Activated B cell treated with CpG ODN at 0.5 μM for 24 hours (primary cell): ENCODE measurements at regions of chr11 and their contacts with region 1.

Region 1: DNA sequence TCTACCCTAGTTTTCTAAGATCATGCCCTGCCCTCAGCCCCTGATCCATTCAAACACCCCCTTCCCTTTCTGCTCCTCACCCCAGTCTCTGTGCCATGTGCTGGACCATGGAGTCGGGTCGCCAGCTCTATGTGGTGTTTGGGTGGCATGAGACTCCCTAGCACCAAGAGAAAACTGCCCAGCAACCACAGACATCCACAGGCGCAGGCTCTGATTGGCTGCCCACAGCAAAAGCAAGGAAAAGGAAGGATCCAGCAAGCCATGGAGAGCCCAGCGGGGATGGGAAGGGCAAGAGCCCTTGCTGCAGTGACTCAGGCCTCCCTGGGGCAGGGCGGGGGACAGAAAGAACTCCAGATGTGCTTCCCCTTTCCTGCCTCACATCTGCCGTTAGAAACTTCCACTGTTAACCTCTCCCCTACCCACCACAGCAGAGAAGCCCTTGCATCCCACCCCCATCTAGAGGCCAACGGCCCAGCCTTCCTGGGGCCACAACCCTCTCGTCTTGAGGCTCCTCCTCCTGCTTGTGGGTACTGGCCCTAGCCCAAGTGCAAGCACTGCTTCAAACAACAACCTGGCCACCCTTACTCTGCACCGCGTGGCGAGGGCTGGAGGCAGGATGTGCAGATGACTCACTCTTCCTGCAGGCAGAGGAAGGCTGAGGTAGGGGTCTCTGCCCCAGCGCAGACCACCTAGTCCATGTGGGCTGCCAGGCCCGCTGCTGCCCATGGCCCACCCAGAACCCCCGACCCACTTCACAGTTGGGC is 9.7 kb upstream of the AHNAK start:
- DNase-seq: peak; percentile 64
- ATAC-seq: peak; percentile 35
- H3K4me3 Mint-ChIP-seq: peak overlapping the region; percentile 81
- H3K27ac Mint-ChIP-seq: peak overlapping the region; percentile 99
- H3K4me1 Mint-ChIP-seq: peaks cover 87% of the 10 kb centered on the region
- H3K27me3 Mint-ChIP-seq: no peaks in the 10 kb centered on the region
- CTCF ChIP-seq: no peak

Region 2: GRCh38 chr11:62394825-62395538 is 161.3 kb before region 1 on chr11:
- CTCF ChIA-PET with region 1: interaction called, 16 read pairs
- POLR2A ChIA-PET with region 1: interaction called, 5 read pairs
- intact Hi-C with region 1: loop called (anchors 1 kb)
- DNase-seq: no peak
- ATAC-seq: peak; percentile 79
- H3K4me3 Mint-ChIP-seq: no peak overlapping the region
- H3K27ac Mint-ChIP-seq: no peak overlapping the region
- H3K4me1 Mint-ChIP-seq: no peaks in the 10 kb centered on the region
- H3K27me3 Mint-ChIP-seq: peaks cover 6% of the 10 kb centered on the region
- CTCF ChIP-seq: no peak

Region 3: DNA sequence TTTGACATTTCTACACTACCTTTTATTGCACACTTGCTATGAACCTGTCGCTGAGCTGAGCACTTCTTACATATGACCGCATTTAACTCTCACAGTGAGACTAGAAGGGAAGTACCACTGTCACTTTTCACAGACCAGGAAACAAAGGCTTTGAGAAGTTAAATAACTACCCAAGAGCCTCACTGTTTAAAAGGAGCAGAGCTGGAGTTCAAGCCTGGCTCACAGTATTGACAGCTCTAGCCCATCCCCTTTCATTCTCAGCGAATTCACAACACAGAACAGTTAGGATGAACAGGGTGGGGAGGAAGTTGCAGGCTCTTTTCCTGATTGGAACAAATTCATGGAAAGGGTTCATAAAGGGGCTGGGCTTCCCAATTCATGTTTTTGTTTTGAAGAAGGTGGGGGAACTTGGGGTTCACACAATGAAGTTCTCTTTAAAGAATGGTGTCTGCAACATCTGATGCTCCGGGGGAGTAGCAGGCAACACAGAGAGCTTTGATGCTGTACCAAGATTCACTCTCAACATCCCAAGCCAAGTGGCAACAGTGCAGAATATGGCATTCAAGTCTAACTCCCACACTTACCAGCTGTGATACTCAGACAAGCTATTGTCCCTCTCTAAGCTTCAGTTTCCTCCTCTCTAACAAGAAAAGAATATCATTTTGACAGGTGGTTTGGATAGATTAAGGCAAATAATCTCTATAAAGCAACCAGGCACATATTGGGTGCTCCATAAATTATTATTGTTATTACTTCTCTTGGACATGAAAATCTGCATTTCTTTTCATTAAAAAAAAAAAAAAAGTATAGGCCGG is 120.2 kb before region 1 on chr11:
- CTCF ChIA-PET with region 1: no interaction called
- POLR2A ChIA-PET with region 1: interaction called, 12 read pairs
- intact Hi-C with region 1: no loop called
- DNase-seq: no peak
- ATAC-seq: peak; percentile 66
- H3K4me3 Mint-ChIP-seq: no peak overlapping the region
- H3K27ac Mint-ChIP-seq: peak overlapping the region; percentile 5
- H3K4me1 Mint-ChIP-seq: peaks cover 36% of the 10 kb centered on the region
- H3K27me3 Mint-ChIP-seq: no peaks in the 10 kb centered on the region
- CTCF ChIP-seq: no peak

Region 4: GRCh38 chr11:62497132-62497915 is 59.0 kb before region 1 on chr11:
- CTCF ChIA-PET with region 1: interaction called, 13 read pairs
- POLR2A ChIA-PET with region 1: interaction called, 3 read pairs
- intact Hi-C with region 1: loop called (anchors 1 kb)
- DNase-seq: no peak
- ATAC-seq: peak; percentile 66
- H3K4me3 Mint-ChIP-seq: no peak overlapping the region
- H3K27ac Mint-ChIP-seq: no peak overlapping the region
- H3K4me1 Mint-ChIP-seq: no peaks in the 10 kb centered on the region
- H3K27me3 Mint-ChIP-seq: peaks cover 7% of the 10 kb centered on the region
- CTCF ChIP-seq: no peak

Region 5: DNA sequence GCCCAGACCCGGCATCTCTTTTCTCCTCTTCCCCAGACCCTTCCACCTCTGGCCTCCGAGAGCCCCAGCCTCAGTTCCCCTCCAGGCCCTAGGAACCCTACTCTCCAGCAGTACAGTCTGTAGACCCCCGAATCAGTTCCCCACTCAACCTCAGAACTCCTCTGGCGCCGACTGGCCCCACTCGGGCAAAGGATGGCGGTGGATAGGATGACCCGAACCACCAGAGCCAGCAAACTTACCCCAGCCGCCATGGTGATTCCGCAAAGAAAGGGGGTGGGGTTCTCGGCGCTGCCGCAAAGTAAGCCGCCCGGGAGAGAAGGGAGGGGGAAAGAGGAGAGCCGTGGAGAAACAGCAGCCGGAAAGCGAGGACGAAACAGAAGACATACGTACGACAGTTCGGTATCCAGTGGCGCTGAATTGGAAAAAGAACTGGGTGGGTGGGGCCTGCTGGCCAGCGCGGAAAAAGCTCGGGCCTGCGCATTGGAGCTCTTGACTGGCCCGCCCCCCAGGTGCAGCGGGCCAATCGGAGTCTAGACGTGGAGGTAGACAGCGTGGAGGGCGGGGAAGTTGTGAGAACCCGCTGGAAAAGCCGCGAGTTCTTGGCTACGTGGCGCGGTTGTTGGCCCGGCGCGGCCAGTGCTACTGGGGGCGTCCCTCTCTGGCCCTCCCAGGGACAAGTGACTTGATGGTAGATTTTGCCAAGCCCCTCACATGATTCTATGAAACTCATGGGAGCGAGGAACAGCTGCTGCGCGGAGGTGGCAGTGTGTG is 17.5 kb after region 1 on chr11 and contains the start of gene EEF1G:
- CTCF ChIA-PET with region 1: interaction called, 3 read pairs
- POLR2A ChIA-PET with region 1: interaction called, 40 read pairs
- intact Hi-C with region 1: loop called (anchors 1 kb)
- DNase-seq: peak; percentile 92
- ATAC-seq: peak; percentile 94
- H3K4me3 Mint-ChIP-seq: peak within 1 kb of the TSS; percentile 97
- H3K27ac Mint-ChIP-seq: peak within 1 kb of the TSS; percentile 94
- H3K4me1 Mint-ChIP-seq: peaks cover 51% of the 10 kb centered on the region
- H3K27me3 Mint-ChIP-seq: no peaks in the 10 kb centered on the region
- CTCF ChIP-seq: no peak
- total RNA-seq, gene EEF1G: 2,373 and 2,524 TPM in 2 replicates

Region 6: DNA sequence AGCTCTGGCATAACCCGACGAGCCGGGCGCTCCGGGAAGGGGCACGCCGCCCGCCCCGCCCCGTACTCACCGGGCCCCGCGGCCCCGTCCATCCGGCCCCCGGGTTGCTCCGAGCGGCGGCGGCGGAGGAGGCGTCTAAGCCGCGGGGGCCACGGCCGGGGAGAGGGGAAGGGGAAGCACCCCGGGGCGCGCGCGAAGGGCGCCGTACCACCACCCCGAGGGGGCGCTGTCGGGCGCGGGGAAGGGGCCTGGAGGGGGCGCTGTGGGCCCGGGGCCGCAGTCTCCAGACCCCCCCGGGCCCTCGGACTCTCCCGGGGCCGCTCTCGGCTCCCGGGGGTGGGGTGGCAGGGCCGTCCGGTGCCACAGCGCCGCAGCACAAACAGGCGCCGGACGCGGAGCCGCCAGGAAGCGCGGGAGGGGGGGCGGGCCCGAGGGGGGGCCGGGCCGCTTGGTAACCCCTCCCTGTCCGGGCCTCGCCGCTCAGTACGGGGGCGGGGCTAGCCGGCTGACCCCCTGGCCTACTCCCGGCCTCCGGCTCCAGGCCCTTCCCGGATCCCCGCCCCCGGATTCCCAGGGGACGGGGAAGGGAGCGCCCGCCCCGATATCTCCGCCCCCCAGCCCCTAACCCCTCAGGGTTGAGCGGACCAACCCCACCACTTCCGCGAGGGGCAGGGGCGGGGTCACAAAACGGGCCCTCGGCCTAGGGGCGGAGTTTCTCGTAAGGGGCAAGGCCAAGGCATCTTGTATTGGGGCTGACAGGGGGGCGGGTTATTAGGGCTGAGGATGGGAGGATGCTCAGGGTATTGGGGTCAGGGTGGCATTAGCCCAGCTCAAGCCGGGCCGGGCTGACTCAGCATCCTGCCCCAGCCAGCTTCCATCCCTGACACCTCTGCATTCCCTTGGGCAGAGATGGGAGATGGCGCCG is 56.3 kb after region 1 on chr11 and contains the starts of genes EML3 and ROM1:
- CTCF ChIA-PET with region 1: no interaction called
- POLR2A ChIA-PET with region 1: no interaction called
- intact Hi-C with region 1: no loop called
- DNase-seq: peak; percentile 95
- ATAC-seq: peak; percentile 82
- H3K4me3 Mint-ChIP-seq: peak within 1 kb of the TSS; percentile 93
- H3K27ac Mint-ChIP-seq: peak within 1 kb of the TSS; percentile 95
- H3K4me1 Mint-ChIP-seq: peaks cover 27% of the 10 kb centered on the region
- H3K27me3 Mint-ChIP-seq: no peaks in the 10 kb centered on the region
- CTCF ChIP-seq: peak; percentile 59
- total RNA-seq, gene EML3: 115 and 128 TPM in 2 replicates
- total RNA-seq, gene ROM1: 0.89 and 2.6 TPM in 2 replicates

Region 7: GRCh38 chr11:62652161-62653006 is 96.1 kb after region 1 on chr11:
- CTCF ChIA-PET with region 1: no interaction called
- POLR2A ChIA-PET with region 1: interaction called, 10 read pairs
- intact Hi-C with region 1: no loop called
- DNase-seq: no peak
- ATAC-seq: no peak
- H3K4me3 Mint-ChIP-seq: peak overlapping the region; percentile 90
- H3K27ac Mint-ChIP-seq: peak overlapping the region; percentile 90
- H3K4me1 Mint-ChIP-seq: peaks cover 28% of the 10 kb centered on the region
- H3K27me3 Mint-ChIP-seq: no peaks in the 10 kb centered on the region
- CTCF ChIP-seq: no peak

Region 8: DNA sequence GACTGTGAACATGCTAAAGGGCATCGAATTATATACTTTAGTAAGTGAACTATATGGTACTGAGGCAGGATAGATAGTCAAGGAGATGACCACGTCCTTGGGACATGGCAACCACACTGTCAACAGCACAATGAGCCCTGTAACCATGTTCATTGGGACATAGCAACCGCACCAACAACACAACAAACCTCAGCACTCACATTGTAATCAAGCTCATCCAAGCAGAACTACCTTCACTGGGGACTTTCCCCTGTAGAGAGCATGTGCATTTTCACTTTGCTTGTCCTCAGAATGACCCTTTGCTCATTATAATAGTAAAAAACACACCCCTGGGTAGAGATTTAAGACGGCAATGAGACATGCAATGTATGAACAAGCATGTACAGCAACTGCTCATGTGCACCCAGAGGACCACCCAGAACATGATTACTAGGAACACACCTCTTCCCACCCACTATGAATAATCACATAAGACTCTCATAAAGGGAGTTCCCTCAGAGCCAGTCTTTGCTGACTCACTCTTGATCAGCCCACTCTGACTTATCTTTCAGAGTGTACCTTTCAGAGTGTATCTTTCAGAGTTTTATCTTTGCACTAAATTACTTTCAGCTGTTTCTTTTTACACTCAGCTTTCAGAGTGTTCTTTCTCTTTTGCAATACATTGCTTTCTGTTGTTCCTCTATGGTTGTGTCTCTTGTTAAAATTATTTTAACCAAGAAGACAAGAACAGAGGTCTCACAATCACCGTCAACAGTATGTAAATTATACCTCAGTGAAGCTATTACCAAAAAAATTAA is 1011.0 kb after region 1 on chr11:
- CTCF ChIA-PET with region 1: no interaction called
- POLR2A ChIA-PET with region 1: no interaction called
- intact Hi-C with region 1: loop called (anchors 5 kb)
- DNase-seq: peak; percentile 44
- ATAC-seq: peak; percentile 79
- H3K4me3 Mint-ChIP-seq: peak overlapping the region; percentile 78
- H3K27ac Mint-ChIP-seq: peak overlapping the region; percentile 96
- H3K4me1 Mint-ChIP-seq: peaks cover 58% of the 10 kb centered on the region
- H3K27me3 Mint-ChIP-seq: peaks cover 5% of the 10 kb centered on the region
- CTCF ChIP-seq: no peak